Heart left ventricle (tissue), 16 donors: ENCODE measurements at regions of chr3 and their contacts with region 1.

Region 1: DNA sequence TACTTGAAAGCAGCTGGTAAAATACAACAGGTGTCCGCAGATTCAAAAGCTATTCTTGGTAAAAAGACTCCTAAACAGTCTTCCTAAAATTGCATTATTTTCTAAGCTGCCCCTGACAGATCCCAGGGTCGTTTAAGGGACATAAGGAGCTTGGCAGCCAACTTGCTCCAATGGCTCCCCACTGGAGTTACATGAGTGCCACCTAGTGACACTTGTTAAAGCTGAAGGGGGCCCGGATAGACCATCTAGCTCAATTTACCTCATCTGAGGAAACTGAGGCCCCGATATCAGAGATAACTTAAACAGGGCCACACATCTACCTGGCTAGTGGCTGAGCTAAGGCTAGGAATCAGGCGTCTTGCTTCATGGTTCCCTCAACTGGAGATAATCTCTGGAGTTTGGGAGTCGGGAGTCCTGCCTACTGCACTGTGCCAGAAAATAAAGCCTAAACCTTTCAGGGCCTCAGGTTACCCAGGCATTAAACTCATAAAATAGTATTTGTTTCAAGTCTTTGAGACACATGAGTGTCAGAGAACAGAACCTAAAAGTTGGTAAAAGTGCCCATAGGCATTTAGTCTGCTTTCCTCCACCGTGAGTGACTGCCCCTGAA is 6.5 kb upstream of the TBC1D23 start:
- DNase-seq: peak in 4 of 5 donors; percentile 66 to 72 (median 68)
- ATAC-seq: peak; percentile 77 to 94 (median 91)
- H3K4me3 ChIP-seq: no peak overlapping the region
- H3K27ac ChIP-seq: peak overlapping the region in 8 of 12 donors; percentile 2 to 63 (median 50)
- H3K4me1 ChIP-seq: peaks cover 0 to 23% (median 8%) of the 10 kb centered on the region in 12 donors
- H3K27me3 ChIP-seq: no peaks in the 10 kb centered on the region
- CTCF ChIP-seq: peak; percentile 64 to 95 (median 86)
- POLR2A ChIP-seq: no peak

Region 2: GRCh38 chr3:99833617-99834205 is 420.6 kb before region 1 on chr3:
- intact Hi-C with region 1: loop called in 2 of 10 experiments (anchors 1 to 5 kb)
- DNase-seq: no peak
- ATAC-seq: peak in 1 of 4 donors; percentile 18
- H3K4me3 ChIP-seq: no peak overlapping the region
- H3K27ac ChIP-seq: peak overlapping the region in 5 of 12 donors; percentile 5 to 37 (median 26)
- H3K4me1 ChIP-seq: peaks cover 0 to 42% (median 15%) of the 10 kb centered on the region in 12 donors
- H3K27me3 ChIP-seq: no peaks in the 10 kb centered on the region
- CTCF ChIP-seq: no peak
- POLR2A ChIP-seq: no peak

Region 3: GRCh38 chr3:99842826-99843589 is 411.3 kb before region 1 on chr3:
- intact Hi-C with region 1: loop called (anchors 2 to 5 kb)
- DNase-seq: no peak
- ATAC-seq: peak; percentile 72 to 80 (median 74)
- H3K4me3 ChIP-seq: peak overlapping the region in 1 of 12 donors; percentile 8
- H3K27ac ChIP-seq: peak overlapping the region; percentile 53 to 83 (median 72)
- H3K4me1 ChIP-seq: peaks cover 12 to 55% (median 47%) of the 10 kb centered on the region in 12 donors
- H3K27me3 ChIP-seq: no peaks in the 10 kb centered on the region
- CTCF ChIP-seq: peak; percentile 59 to 81 (median 72)
- POLR2A ChIP-seq: no peak

Region 4: GRCh38 chr3:99920481-99921376 is 333.5 kb before region 1 on chr3:
- intact Hi-C with region 1: loop called in 1 of 10 experiments (anchors 10 kb)
- DNase-seq: peak; percentile 70 to 86 (median 82)
- ATAC-seq: peak; percentile 59 to 88 (median 72)
- H3K4me3 ChIP-seq: no peak overlapping the region
- H3K27ac ChIP-seq: peak overlapping the region; percentile 54 to 88 (median 78)
- H3K4me1 ChIP-seq: peaks cover 0 to 52% (median 36%) of the 10 kb centered on the region in 12 donors
- H3K27me3 ChIP-seq: no peaks in the 10 kb centered on the region
- CTCF ChIP-seq: no peak
- POLR2A ChIP-seq: no peak

Region 5: DNA sequence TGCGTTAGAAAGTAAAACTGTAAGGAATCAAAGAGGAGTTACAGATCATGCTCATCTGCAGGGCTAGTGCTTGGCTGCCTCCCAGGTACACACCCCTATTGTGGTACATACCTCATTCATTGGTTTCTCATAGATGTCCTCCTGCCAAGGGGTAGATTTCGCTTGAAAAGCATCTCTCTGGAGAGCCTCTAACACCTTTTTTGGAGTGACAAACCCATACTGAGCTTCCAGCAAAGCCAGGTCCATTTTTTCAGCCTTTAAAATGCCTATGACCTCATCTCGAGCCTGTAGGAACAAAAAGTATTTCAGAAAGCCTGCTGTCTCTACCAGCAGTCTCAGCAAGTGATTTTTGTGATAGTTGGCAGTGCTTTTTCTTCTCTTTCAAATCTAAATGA is 324.5 kb before region 1 on chr3:
- intact Hi-C with region 1: loop called in 2 of 10 experiments (anchors 10 kb)
- DNase-seq: peak in 2 of 5 donors; percentile 23 to 46
- ATAC-seq: peak; percentile 40 to 56 (median 45)
- H3K4me3 ChIP-seq: peak overlapping the region in 1 of 12 donors; percentile 3
- H3K27ac ChIP-seq: peak overlapping the region; percentile 12 to 77 (median 52)
- H3K4me1 ChIP-seq: peaks cover 0 to 62% (median 35%) of the 10 kb centered on the region in 12 donors
- H3K27me3 ChIP-seq: no peaks in the 10 kb centered on the region
- CTCF ChIP-seq: no peak
- POLR2A ChIP-seq: no peak

Region 6: DNA sequence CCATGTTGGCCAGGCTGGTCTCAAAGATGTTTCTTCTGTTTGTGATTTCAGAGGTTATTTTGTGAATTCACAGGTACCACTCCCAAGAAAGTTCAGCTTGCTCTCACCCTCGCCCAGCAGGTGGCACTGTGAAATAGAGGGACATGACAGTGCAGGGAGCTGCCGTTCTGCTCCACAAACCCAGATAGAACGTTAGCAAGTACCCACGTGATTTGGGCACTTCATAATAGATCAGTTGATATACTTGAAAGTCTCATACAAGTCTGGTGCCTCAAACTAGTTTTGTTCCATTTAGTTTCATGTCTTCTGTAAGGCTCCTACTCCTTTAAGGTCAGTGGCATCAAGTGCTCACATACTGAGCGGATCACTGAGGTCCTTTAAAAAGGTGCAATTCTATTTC is 185.4 kb before region 1 on chr3:
- intact Hi-C with region 1: loop called (anchors 1 to 5 kb)
- DNase-seq: peak; percentile 80 to 87 (median 81)
- ATAC-seq: peak; percentile 73 to 91 (median 86)
- H3K4me3 ChIP-seq: no peak overlapping the region
- H3K27ac ChIP-seq: peak overlapping the region in 4 of 12 donors; percentile 14 to 60 (median 24)
- H3K4me1 ChIP-seq: peaks cover 0 to 42% (median 23%) of the 10 kb centered on the region in 12 donors
- H3K27me3 ChIP-seq: no peaks in the 10 kb centered on the region
- CTCF ChIP-seq: peak; percentile 49 to 88 (median 76)
- POLR2A ChIP-seq: no peak

Region 7: DNA sequence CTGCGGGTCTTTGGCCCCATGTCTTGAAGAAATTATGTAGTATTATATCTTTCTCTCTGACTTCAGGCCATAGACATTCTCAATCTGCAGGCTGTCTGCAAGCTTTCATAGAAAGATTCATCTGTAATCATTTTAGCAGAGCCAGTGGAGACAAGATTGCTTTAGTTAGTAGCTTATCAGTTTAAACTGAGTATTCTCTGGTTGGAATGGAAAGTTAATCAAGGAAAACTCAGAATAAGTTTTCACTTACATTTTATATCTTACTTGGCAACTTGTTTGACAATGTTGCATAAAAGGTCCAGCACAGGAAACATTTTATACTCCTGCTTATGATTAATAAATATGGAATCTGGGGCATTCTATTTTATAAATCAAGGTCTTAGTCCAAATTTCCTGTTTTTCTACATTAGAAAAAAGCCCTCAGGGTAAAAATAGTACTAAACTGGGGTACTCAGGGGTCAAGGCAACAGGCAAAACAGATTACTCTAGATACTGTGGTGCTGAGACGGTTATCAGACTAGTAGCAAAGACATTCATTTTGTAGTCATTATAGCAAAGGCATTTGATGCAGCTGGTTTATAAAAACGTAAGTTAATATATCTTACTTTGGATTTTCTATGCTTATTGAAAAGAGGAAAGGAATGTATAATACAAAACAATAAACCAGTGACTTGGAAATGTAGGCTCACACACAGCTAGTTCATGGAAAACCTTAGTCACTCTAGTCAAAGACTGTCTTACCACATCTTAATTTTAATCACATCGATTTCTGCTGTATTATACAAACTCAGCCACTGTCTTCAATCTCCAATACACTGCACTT is 94.7 kb before region 1 on chr3:
- intact Hi-C with region 1: loop called in 3 of 10 experiments (anchors 10 kb)
- DNase-seq: no peak
- ATAC-seq: peak in 1 of 4 donors; percentile 28
- H3K4me3 ChIP-seq: no peak overlapping the region
- H3K27ac ChIP-seq: peak overlapping the region; percentile 10 to 80 (median 66)
- H3K4me1 ChIP-seq: peaks cover 0 to 63% (median 44%) of the 10 kb centered on the region in 12 donors
- H3K27me3 ChIP-seq: no peaks in the 10 kb centered on the region
- CTCF ChIP-seq: no peak
- POLR2A ChIP-seq: no peak

Region 8: DNA sequence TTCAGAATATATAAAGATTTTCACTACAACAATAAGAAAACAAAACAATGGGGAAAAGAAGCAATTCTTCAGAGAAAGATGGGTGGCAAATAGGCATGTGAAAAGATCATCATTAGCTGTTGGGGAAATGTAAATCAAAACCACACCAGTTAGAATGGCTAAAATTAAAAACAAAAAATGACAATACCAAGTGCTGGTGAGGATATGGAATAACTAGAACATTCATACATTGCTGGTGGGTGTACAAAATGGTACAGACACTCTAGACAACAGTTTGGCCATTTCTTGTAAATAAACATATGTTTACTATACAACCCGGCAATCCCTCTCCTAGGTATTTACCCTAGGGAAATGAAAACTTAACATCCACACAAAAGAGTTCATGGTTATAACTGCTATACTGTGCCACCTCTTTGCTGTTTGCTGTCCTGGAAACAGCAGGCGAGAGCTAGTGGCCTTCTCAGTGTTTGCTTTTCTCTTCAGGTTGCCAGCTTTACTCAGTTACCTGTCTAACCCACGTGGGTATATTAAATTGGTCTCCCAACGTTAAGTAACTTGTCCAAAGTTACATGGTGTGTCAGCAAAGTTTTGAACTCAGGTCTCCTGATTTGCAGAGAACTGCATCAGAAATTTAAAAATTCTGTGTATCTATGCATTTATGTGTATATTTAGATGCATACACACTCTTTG is 75.7 kb after region 1 on chr3:
- intact Hi-C with region 1: no loop called
- DNase-seq: no peak
- ATAC-seq: no peak
- H3K4me3 ChIP-seq: no peak overlapping the region
- H3K27ac ChIP-seq: no peak overlapping the region
- H3K4me1 ChIP-seq: peaks cover 0 to 10% (median 0%) of the 10 kb centered on the region in 12 donors
- H3K27me3 ChIP-seq: no peaks in the 10 kb centered on the region
- CTCF ChIP-seq: no peak
- POLR2A ChIP-seq: no peak